Activated T-helper 1 cell treated with anti-CD3 and anti-CD28 coated beads, Interleukin-12 subunit alpha, Interleukin-12 subunit beta, Interleukin-2, Interleukin-4 antibody, amounts not matched to agents 30 ng/mL and 10 ng/mL and 1 ng/mL, durations not matched to agents 14 hours and 24 hours and 36 hours (primary cell): ENCODE measurements at regions of chrX and their contacts with region 1.

Region 1: DNA sequence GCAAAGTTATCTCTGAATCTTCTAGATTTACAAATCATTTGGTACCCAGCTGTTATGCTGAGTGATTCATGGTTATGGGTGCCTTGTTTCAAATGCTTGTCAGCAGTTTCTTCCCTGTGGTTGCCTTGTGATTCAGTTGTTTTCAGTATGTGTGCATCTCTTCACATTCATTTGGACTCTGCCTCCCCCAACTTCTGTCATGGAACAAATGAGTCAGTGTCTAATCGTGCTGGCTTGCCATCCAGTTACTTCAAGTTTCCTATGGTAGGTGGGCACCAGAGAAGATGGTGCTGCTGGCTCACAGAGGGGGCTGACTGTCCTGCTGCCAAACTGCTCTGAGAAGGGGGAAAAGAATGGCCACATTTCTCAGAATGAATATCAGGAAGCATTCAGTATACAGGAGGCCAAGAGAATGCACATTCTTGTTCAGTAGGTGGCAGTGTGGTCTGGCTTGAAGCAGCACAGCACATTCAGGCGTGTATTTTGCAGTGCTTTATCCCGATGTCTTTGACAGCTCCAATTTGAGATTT is 260.9 kb downstream of the GLUD2 start:
- DNase-seq: peak; percentile 30
- H3K4me3 Mint-ChIP-seq: peak overlapping the region; percentile 47
- H3K27ac Mint-ChIP-seq: peak overlapping the region; percentile 97
- H3K4me1 Mint-ChIP-seq: peaks cover 24% of the 10 kb centered on the region
- H3K27me3 Mint-ChIP-seq: no peaks in the 10 kb centered on the region

Region 2: GRCh38 chrX:120499301-120500072 is 808.9 kb before region 1 on chrX:
- intact Hi-C with region 1: loop called (anchors 1 kb)
- DNase-seq: no peak
- H3K4me3 Mint-ChIP-seq: no peak overlapping the region
- H3K27ac Mint-ChIP-seq: no peak overlapping the region
- H3K4me1 Mint-ChIP-seq: peaks cover 6% of the 10 kb centered on the region
- H3K27me3 Mint-ChIP-seq: no peaks in the 10 kb centered on the region

Region 3: GRCh38 chrX:120603707-120604360 is 704.5 kb before region 1 on chrX and contains the start of gene MCTS1:
- intact Hi-C with region 1: loop called (anchors 10 kb)
- DNase-seq: peak; percentile 75
- H3K4me3 Mint-ChIP-seq: peak within 1 kb of the TSS; percentile 99
- H3K27ac Mint-ChIP-seq: peak within 1 kb of the TSS; percentile 99
- H3K4me1 Mint-ChIP-seq: peaks cover 10% of the 10 kb centered on the region
- H3K27me3 Mint-ChIP-seq: no peaks in the 10 kb centered on the region
- total RNA-seq, gene MCTS1: 67.3 and 70.1 TPM in 2 replicates

Region 4: DNA sequence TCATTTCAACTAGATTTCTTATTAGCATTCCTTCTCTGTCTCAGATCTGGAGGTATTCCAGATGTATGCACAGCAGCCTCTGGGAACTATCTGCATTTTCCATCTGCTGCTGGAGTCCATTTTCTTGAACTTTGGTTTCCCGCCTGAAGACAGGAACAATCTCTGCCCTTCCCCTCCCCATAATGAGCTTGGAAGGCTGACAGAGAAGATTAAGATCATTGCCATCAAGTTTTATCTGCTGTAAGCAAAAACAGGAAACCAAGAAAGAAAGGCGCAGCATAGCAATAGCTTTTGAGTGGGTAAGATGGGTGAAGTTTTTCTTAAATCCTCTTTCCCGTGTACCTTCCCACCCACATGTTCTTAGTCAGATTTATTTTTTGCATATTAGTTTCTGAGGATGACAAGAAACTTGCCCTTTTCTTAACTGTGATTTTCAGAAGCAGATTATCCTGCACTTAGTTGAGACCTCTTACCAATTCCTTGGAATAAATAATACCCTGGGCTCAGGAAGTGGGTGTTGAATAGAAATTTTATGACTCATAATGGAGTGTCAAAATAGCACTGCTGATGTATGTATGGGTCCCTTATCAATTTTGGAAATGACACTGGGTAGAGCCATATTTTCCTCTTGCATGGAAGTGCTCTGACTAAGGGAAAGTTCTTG is 511.0 kb before region 1 on chrX:
- intact Hi-C with region 1: loop called (anchors 1 kb)
- DNase-seq: no peak
- H3K4me3 Mint-ChIP-seq: peak overlapping the region; percentile 23
- H3K27ac Mint-ChIP-seq: peak overlapping the region; percentile 85
- H3K4me1 Mint-ChIP-seq: peaks cover 36% of the 10 kb centered on the region
- H3K27me3 Mint-ChIP-seq: no peaks in the 10 kb centered on the region

Region 5: GRCh38 chrX:121244511-121244910 is 63.8 kb before region 1 on chrX:
- intact Hi-C with region 1: loop called (anchors 5 kb)
- DNase-seq: no peak
- H3K4me3 Mint-ChIP-seq: no peak overlapping the region
- H3K27ac Mint-ChIP-seq: no peak overlapping the region
- H3K4me1 Mint-ChIP-seq: no peaks in the 10 kb centered on the region
- H3K27me3 Mint-ChIP-seq: no peaks in the 10 kb centered on the region

Region 6: GRCh38 chrX:121504148-121504547 is 195.8 kb after region 1 on chrX:
- intact Hi-C with region 1: loop called (anchors 1 kb)
- DNase-seq: no peak
- H3K4me3 Mint-ChIP-seq: no peak overlapping the region
- H3K27ac Mint-ChIP-seq: no peak overlapping the region
- H3K4me1 Mint-ChIP-seq: no peaks in the 10 kb centered on the region
- H3K27me3 Mint-ChIP-seq: no peaks in the 10 kb centered on the region